Breast epithelium (tissue), 4 donors: ENCODE measurements at regions of chr11 and their contacts with region 1.

Region 1: DNA sequence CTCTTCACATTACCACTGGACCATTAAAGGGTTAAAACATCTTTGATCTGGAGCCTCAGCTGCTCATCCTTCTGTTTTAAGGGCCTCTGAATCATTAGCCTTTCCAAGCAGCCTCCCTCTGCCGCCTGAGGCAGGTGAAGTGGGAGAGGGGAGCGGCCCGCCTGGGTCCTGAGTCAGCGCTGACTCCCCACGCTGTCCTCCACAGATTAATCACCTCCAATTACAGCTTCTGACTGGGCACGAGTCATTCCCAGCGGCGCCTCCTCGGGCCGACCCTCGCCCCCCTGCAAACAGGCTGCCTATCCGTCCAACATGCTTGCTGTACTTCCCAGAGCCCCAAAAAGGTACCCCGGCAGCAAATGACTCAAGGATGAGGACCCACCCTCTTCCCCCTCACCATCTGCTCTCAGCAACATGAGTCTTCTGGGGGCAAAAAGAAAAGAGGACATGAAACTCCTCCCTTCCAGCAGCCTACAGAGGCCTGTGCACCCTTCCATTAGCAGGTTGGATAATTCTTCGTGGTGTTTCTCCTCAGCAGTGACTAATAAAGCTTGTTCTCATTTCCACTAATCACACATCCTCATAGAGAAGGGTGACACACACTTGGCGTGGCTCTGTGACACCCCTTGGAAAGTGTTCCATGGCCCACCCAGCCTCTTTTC is 44.3 kb upstream of the JAM3 start:
- DNase-seq: no peak
- H3K4me3 ChIP-seq: no peak overlapping the region
- H3K27ac ChIP-seq: no peak overlapping the region
- H3K4me1 ChIP-seq: no peaks in the 10 kb centered on the region
- H3K27me3 ChIP-seq: peaks cover 0 to 43% of the 10 kb centered on the region in 2 donors
- CTCF ChIP-seq: no peak
- POLR2A ChIP-seq: no peak

Region 2: DNA sequence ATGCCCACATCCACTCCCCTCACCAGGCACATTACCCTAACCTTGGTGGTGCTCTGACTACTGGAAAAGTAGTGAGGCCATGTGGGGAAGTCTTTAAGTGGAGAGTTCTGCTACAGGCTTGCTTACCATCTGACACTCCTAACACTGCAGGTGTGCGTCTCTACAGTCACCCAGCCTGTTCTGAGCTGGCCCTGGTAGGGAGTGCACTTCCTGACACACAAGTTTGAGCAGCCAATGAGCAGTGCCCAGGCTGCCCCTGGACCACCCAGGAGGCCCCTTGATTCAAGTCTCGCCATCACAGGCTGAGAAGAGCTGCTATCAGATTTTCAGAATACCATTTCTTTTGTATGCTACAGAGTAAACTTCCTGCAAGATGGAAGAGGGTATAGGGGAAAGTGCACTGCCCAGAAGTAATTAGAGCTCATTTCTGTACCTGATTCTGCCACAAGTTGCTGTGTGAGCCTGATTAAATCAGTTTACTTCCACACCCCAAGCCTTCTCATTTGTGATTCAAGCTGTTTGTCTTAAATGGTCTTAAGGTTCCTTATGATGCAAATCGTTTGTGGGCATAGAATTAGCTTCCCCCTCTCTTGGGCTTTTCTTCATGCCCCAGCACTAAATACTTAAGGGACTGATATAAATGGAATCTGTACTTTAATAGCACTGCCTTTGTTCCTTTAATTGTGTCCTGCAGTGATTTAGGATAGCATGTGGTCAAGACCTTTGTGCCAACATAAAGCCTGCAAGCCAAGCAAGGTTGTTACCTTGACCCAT is 514.4 kb before region 1 on chr11:
- intact Hi-C with region 1: loop called (anchors 5 kb)
- DNase-seq: no peak
- H3K4me3 ChIP-seq: no peak overlapping the region
- H3K27ac ChIP-seq: no peak overlapping the region
- H3K4me1 ChIP-seq: no peaks in the 10 kb centered on the region
- H3K27me3 ChIP-seq: no peaks in the 10 kb centered on the region
- CTCF ChIP-seq: no peak
- POLR2A ChIP-seq: no peak

Region 3: GRCh38 chr11:133927690-133928627 is 96.6 kb before region 1 on chr11:
- intact Hi-C with region 1: no loop called
- DNase-seq: peak; percentile 64 to 84
- H3K4me3 ChIP-seq: peak overlapping the region in 2 of 3 donors; percentile 40 to 61
- H3K27ac ChIP-seq: peak overlapping the region in 1 of 2 donors; percentile 60
- H3K4me1 ChIP-seq: no peaks in the 10 kb centered on the region
- H3K27me3 ChIP-seq: no peaks in the 10 kb centered on the region
- CTCF ChIP-seq: peak; percentile 72 to 89 (median 87)
- POLR2A ChIP-seq: no peak